Dorsolateral prefrontal cortex (tissue), 120 donors: ENCODE measurements at regions of chr16 and their contacts with region 1.

Region 1: DNA sequence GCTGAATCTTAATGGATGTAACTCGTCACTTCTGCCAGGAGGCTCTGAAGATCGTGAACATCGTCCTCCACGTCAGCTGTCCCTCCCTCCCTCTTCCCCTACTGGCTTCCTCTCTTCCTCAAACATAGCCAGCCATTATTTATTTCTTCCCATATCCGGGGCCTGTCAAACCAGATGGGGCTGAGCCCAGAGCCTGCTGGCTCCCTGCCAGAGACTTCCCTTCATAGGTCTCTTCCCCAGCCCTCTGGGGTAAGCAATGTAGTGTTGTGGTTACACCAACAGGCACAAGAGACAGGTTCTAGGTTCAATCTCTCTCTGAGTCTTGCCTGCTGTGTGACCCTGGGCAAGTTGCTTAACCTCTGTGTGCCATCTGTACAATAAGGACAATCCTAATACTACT is 40.1 kb upstream of the ZFP90 start:
- DNase-seq: no peak
- H3K4me3 ChIP-seq: no peak overlapping the region
- H3K27ac ChIP-seq: no peak overlapping the region
- H3K27me3 ChIP-seq: no peaks in the 10 kb centered on the region
- CTCF ChIP-seq: no peak

Region 2: DNA sequence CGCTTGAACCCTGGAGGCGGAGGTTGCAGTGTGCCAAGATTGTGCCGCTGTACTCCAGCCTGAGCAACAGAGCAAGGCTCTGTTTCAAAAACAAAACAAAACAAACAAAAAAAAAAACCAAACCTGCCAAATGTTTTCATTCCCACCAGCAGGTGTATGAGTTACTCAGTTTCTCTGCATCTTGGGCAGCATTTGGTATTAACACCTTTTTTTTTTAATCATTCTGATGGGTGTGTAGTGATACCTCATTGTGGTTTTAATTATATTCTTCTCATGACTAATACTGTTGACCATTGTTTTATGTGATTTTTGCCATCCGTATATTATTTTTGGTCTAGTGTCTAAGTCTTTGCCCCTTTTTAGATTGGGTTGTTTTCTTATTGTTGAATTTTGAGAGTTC is 398.5 kb before region 1 on chr16:
- intact Hi-C with region 1: loop called in 1 of 2 experiments (anchors 5 kb)
- DNase-seq: no peak
- H3K4me3 ChIP-seq: no peak overlapping the region
- H3K27ac ChIP-seq: no peak overlapping the region
- H3K27me3 ChIP-seq: no peaks in the 10 kb centered on the region
- CTCF ChIP-seq: no peak

Region 3: GRCh38 chr16:68367030-68367429 is 132.0 kb before region 1 on chr16:
- intact Hi-C with region 1: loop called in 1 of 2 experiments (anchors 10 kb)
- DNase-seq: peak in 2 of 10 donors; percentile 41 to 71
- H3K4me3 ChIP-seq: no peak overlapping the region
- H3K27ac ChIP-seq: no peak overlapping the region
- H3K27me3 ChIP-seq: no peaks in the 10 kb centered on the region
- CTCF ChIP-seq: peak in 52 of 56 donors; percentile 10 to 61 (median 46)

Region 4: DNA sequence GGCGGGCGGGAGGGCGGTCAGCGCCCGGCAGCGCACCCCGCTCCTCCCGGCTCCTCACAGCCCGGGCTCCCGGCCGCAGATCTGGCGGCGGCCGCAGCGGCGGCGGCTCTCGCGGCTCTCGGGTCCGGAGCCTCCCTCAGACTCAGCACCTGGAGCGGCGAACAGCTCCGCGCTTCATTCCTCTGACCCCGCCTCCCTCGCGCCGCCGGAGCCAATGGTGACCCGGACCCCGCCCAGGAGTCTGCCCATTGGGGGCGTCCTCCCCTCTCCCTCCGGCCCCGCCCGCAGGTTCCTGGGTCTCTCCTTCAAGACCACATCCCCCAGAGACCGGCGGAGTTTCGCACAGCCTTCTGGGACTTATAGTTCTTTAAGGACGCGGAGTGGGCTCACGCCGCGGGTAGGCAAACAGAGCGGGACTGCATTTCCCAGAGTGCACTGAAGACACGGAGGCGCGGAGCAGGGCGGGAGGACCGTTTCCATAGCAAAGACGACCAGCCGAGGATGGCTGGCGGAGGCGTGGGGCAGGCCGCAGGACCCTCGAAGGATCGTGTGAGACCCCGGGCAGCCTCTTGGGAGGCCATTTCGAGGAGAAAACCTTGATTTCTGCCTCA is 50.5 kb before region 1 on chr16 and contains the start of gene SMPD3:
- intact Hi-C with region 1: no loop called
- DNase-seq: peak; percentile 98 to 100 (median 100)
- H3K4me3 ChIP-seq: peak within 1 kb of the TSS; percentile 47 to 95 (median 75)
- H3K27ac ChIP-seq: peak within 1 kb of the TSS in 46 of 59 donors; percentile 22 to 76 (median 60)
- H3K27me3 ChIP-seq: peaks cover 0 to 19% (median 0%) of the 10 kb centered on the region in 45 donors
- CTCF ChIP-seq: peak in 40 of 56 donors; percentile 6 to 68 (median 38)
- total RNA-seq, gene SMPD3: 5.3 to 40.7 (median 21.2) TPM